ENCODE measurements at regions of chr5 and their contacts with region 1.

Region 1: GRCh38 chr5:149551200-149552037 is at the start of gene CSNK1A1:
- DNase-seq: peak; percentile 99
- H3K4me3 ChIP-seq: peak within 1 kb of the TSS; percentile 88 to 95
- H3K27ac ChIP-seq: peak within 1 kb of the TSS; percentile 92 to 96
- H3K4me1 ChIP-seq: peaks cover 6 to 15% of the 10 kb centered on the region in 2 experiments; a peak in 3 of 4 replicates
- H3K27me3 ChIP-seq: no peaks in the 10 kb centered on the region
- CTCF ChIP-seq: peak; percentile 78
- EP300 ChIP-seq: 0 out of 4 replicates have a peak, but pooled peaks have one; percentile 6 to 19
- RAD21 ChIP-seq: peak; percentile 66
- polyA plus RNA-seq, gene CSNK1A1: 70.7 and 96.6 TPM in 2 replicates

Region 2: GRCh38 chr5:149357370-149358293 is 193.8 kb before region 1 on chr5 and contains the start of gene PCYOX1L:
- CTCF ChIA-PET with region 1: interaction called, 10 read pairs
- POLR2A ChIA-PET with region 1: interaction called, 4 read pairs
- DNase-seq: peak; percentile 98
- H3K4me3 ChIP-seq: peak within 1 kb of the TSS; percentile 62 to 85
- H3K27ac ChIP-seq: peak within 1 kb of the TSS in 1 of 2 experiments; percentile 84; a peak in 2 of 4 replicates
- H3K4me1 ChIP-seq: peaks cover 0 to 12% of the 10 kb centered on the region in 2 experiments; a peak in 1 of 4 replicates
- H3K27me3 ChIP-seq: no peaks in the 10 kb centered on the region
- CTCF ChIP-seq: no peak
- EP300 ChIP-seq: no peak
- RAD21 ChIP-seq: no peak
- polyA plus RNA-seq, gene PCYOX1L: 17.4 and 17.5 TPM in 2 replicates

Region 3: GRCh38 chr5:149561848-149562247 is 10.4 kb after region 1 on chr5:
- CTCF ChIA-PET with region 1: interaction called, 21 read pairs
- POLR2A ChIA-PET with region 1: interaction called, 5 read pairs
- DNase-seq: peak; percentile 50
- H3K4me3 ChIP-seq: peak overlapping the region; percentile 19 to 42; a peak in 3 of 4 replicates
- H3K27ac ChIP-seq: peak overlapping the region; percentile 88 to 98
- H3K4me1 ChIP-seq: peaks cover 10 to 28% of the 10 kb centered on the region in 2 experiments
- H3K27me3 ChIP-seq: no peaks in the 10 kb centered on the region
- CTCF ChIP-seq: no peak
- EP300 ChIP-seq: peak; percentile 39 to 83; a peak in 3 of 4 replicates
- RAD21 ChIP-seq: no peak

Region 4: DNA sequence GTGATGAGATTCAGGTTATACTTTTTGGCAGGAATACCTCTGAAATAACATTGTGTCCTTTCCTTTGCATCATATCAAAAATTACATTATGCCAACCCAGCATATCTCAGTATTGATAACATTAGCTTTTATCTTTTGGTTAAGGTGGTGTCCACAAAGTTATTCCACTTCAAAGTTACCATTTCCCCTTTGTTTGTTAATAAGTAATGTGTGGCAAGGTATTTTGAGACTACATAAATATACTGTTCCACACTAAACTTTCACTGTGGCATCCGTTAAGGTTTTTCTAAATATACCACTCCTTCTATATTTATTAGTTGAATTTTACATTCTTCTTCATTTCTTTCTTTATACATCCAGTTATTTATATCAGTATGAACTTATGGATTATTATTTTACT is 15.8 kb after region 1 on chr5:
- CTCF ChIA-PET with region 1: interaction called, 21 read pairs
- POLR2A ChIA-PET with region 1: interaction called, 5 read pairs
- DNase-seq: no peak
- H3K4me3 ChIP-seq: no peak overlapping the region
- H3K27ac ChIP-seq: no peak overlapping the region
- H3K4me1 ChIP-seq: peaks cover 5 to 18% of the 10 kb centered on the region in 2 experiments
- H3K27me3 ChIP-seq: no peaks in the 10 kb centered on the region
- CTCF ChIP-seq: no peak
- EP300 ChIP-seq: no peak
- RAD21 ChIP-seq: no peak